CD4-positive, alpha-beta T cell (primary cell): ENCODE measurements at regions of chr10 and their contacts with region 1.

Region 1: GRCh38 chr10:93821051-93821772 is 63.5 kb downstream of the LGI1 start:
- DNase-seq: peak in 3 of 14 experiments; percentile 10 to 19 (median 18)
- ATAC-seq: no peak
- H3K4me3 ChIP-seq: no peak overlapping the region
- H3K4me3 Mint-ChIP-seq: no peak overlapping the region
- H3K27ac ChIP-seq: no peak overlapping the region
- H3K27ac Mint-ChIP-seq: no peak overlapping the region
- H3K4me1 ChIP-seq: no peaks in the 10 kb centered on the region
- H3K4me1 Mint-ChIP-seq: peaks cover 2% of the 10 kb centered on the region
- H3K27me3 ChIP-seq: peaks cover 10 to 13% of the 10 kb centered on the region in 2 experiments
- H3K27me3 Mint-ChIP-seq: peaks cover 28% of the 10 kb centered on the region
- CTCF ChIP-seq: no peak

Region 2: DNA sequence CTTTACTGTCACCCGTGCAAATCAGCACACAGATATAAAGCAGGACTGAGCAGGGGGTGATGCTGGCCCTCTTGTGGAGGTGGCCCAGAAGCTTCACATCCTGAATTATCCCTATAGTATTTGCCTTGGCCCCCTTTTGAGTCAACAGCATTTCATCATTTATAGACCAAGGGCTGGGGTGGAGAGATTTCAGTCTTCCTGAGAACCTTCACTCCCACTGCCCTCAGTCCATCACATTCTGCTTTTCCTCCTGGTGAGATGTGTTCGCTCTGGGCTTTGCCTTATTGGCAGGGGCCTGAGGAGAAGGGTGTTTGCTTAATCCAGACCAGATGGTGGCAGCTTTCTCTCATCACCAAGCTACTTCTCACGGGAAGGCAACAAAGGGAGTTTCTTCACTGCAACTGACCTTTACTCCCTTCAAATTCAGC is 493.8 kb after region 1 on chr10:
- CTCF ChIA-PET with region 1: no interaction called
- POLR2A ChIA-PET with region 1: no interaction called
- intact Hi-C with region 1: loop called (anchors 5 to 10 kb)
- DNase-seq: no peak
- ATAC-seq: no peak
- H3K4me3 ChIP-seq: no peak overlapping the region
- H3K4me3 Mint-ChIP-seq: no peak overlapping the region
- H3K27ac ChIP-seq: no peak overlapping the region
- H3K27ac Mint-ChIP-seq: no peak overlapping the region
- H3K4me1 ChIP-seq: no peaks in the 10 kb centered on the region
- H3K4me1 Mint-ChIP-seq: no peaks in the 10 kb centered on the region
- H3K27me3 ChIP-seq: no peaks in the 10 kb centered on the region
- H3K27me3 Mint-ChIP-seq: peaks cover 25% of the 10 kb centered on the region
- CTCF ChIP-seq: no peak